Activated T-helper 1 cell treated with anti-CD3 and anti-CD28 coated beads, Interleukin-12 subunit alpha, Interleukin-12 subunit beta, Interleukin-2, Interleukin-4 antibody, amounts not matched to agents 30 ng/mL and 10 ng/mL and 1 ng/mL, durations not matched to agents 14 hours and 24 hours and 36 hours (primary cell): ENCODE measurements at regions of chr17 and their contacts with region 1.

Region 1: DNA sequence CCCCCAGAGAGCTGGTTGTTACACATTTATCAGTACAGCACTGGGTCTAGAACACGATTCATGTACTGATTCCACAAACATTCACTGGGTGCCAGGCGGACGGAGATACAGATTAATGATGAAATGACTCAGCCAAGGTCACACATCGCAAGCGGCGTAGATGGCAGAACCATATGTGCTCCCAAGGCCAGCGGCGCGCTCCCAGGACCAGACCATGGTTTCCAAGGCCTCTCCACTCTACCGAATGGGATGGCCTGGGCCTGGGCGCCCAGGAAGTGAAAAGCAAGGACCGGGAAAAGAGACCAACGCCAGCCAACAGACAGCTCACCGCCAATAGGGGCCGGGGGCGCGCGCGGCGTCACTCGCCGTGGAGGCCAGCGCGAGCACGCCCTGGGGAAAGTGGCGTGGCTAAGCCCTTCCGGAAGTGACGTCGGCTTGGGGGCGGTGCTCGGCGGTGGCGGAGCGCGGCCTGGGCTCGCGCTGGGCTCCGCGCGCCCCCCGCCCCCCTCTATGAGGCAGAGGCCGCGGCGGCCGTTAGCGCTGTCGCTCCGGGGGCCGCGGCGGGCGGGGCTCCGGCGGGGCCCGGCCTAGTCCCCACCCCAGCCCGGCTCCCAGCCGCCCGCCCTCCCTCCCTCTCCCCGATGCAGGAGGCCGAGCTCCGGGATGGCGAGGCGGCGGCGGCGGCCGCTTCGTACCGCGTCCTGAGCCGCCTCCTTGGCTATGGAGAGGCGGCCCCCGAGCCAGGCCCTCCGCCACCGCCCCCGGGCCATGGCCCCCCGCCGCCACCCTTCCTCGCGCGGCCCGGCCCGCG is at the start of gene SOCS7:
- DNase-seq: peak; percentile 88
- H3K4me3 Mint-ChIP-seq: peak within 1 kb of the TSS; percentile 93
- H3K27ac Mint-ChIP-seq: peak within 1 kb of the TSS; percentile 95
- H3K4me1 Mint-ChIP-seq: peaks cover 36% of the 10 kb centered on the region
- H3K27me3 Mint-ChIP-seq: peaks cover 6% of the 10 kb centered on the region
- total RNA-seq, gene SOCS7: 30.4 and 32.3 TPM in 2 replicates

Region 2: DNA sequence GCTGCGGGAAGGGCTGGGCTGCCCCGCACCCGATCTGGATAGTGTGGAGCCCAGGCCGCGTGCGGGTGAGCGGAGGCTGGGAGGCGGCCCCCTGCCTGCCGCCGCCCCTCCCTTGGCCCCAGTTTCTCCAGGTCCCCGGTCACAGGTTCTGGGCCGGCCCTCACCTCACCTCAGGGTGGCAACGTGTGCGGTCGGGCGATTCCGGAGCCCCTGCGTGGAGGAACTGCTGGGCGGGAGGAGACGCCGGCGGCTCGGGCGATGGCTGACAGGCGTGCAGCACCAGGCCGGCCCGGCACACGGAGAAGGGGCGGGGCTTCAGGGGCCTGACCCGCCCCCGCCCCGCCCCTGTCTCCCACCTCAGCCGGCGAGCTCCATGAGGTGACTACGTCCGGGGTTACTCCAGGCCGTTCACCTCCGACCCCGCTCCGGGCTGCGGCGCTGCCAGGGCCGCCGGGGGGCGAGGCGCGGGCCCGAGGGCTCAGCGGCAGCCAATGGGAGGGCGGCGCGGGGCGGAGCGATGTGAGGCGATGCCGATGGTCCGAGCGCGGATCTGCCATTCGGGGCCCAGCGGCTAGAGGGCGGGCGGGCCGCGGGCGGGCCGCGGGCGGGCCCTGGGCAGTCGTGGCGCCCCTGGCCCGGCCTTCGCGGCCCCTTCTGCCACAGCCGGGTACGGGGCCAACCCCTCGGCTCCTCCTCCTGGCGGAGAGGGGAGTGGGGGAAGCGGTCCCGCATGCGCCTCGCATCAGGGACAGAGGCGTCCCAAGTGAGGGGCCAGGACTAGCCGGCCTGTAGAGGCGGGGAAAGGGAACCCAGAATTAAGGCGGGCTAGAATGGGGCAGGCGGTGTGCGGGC is 992.6 kb before region 1 on chr17:
- intact Hi-C with region 1: loop called (anchors 2 kb)
- DNase-seq: peak; percentile 90
- H3K4me3 Mint-ChIP-seq: peak overlapping the region; percentile 98
- H3K27ac Mint-ChIP-seq: peak overlapping the region; percentile 92
- H3K4me1 Mint-ChIP-seq: peaks cover 32% of the 10 kb centered on the region
- H3K27me3 Mint-ChIP-seq: no peaks in the 10 kb centered on the region

Region 3: GRCh38 chr17:38415250-38416194 is 63.9 kb after region 1 on chr17:
- intact Hi-C with region 1: loop called (anchors 1 kb)
- DNase-seq: no peak
- H3K4me3 Mint-ChIP-seq: peak overlapping the region; percentile 37
- H3K27ac Mint-ChIP-seq: peak overlapping the region; percentile 78
- H3K4me1 Mint-ChIP-seq: no peaks in the 10 kb centered on the region
- H3K27me3 Mint-ChIP-seq: peaks cover 31% of the 10 kb centered on the region

Region 4: GRCh38 chr17:38485146-38485468 is 133.5 kb after region 1 on chr17:
- intact Hi-C with region 1: loop called (anchors 2 kb)
- DNase-seq: no peak
- H3K4me3 Mint-ChIP-seq: no peak overlapping the region
- H3K27ac Mint-ChIP-seq: no peak overlapping the region
- H3K4me1 Mint-ChIP-seq: peaks cover 4% of the 10 kb centered on the region
- H3K27me3 Mint-ChIP-seq: peaks cover 6% of the 10 kb centered on the region

Region 5: DNA sequence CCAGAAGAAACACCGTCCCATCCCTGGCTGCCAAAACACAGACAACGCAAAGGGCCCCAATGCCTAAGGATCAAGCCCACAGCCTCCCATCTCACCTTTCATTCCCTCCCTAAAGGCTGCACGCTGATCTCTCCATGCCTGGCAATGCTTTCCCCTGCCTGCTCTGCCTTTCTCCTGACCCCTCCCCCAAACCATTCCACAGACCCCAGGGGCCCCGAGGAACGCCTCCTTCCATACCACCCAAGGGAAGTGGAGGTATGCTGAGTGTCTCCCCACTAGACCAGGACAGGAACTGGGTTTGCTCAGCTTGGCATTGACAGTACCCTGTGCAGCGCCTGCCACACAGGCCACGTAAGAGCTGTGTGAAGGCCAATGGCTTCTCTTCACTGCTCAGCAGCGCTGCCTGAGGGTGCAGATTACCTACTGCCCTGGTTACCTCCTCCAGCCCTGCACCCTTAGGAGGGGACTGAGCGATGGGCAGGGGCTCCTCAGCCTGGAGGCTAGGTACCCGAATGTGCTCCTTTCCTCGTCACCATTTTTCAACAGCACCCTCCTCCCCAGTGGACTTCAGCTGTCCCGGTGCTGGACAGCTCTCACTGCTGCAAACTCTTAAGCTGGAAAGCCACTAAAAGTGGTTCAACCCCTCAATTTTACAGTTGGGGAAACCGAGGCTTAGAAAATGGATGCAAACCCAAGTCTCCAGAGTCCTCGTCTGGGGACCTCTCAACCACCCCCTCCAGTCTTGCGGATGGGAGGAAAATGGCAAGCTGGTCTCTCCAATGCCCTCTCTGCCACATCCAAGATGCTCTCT is 209.1 kb after region 1 on chr17:
- intact Hi-C with region 1: no loop called
- DNase-seq: no peak
- H3K4me3 Mint-ChIP-seq: peak overlapping the region; percentile 35
- H3K27ac Mint-ChIP-seq: peak overlapping the region; percentile 67
- H3K4me1 Mint-ChIP-seq: peaks cover 27% of the 10 kb centered on the region
- H3K27me3 Mint-ChIP-seq: peaks cover 58% of the 10 kb centered on the region

Region 6: DNA sequence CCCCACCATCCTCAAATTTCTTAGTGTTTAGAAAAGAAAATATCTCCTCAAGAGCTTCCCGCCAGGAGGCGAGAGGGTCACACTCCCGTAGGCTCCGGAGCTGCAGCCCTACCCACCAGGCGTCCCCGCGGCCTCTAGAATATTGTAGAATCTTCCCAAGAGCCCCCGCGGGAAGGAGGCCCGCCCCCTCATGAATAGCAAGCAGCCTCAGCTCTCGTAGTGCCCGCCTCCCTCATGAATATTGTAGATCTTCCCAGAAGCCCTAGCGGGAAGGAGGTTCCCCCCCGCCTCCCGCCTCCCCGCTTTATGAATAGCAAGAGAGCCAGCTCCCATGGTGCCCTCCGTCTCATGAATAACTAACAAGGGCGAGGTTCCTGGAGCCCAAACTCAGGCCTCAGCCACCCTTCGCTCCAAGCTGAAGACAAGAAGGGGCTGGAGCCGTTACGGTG is 615.7 kb after region 1 on chr17 and contains the start of gene FBXO47:
- intact Hi-C with region 1: loop called (anchors 5 kb)
- DNase-seq: peak; percentile 72
- H3K4me3 Mint-ChIP-seq: peak within 1 kb of the TSS; percentile 78
- H3K27ac Mint-ChIP-seq: peak within 1 kb of the TSS; percentile 65
- H3K4me1 Mint-ChIP-seq: peaks cover 11% of the 10 kb centered on the region
- H3K27me3 Mint-ChIP-seq: peaks cover 11% of the 10 kb centered on the region
- total RNA-seq, gene FBXO47: 0.08 TPM in 1 of 2 replicates, not detected in the other